H1 (cell line): ENCODE measurements at regions of chr19 and their contacts with region 1.

Region 1: GRCh38 chr19:13033819-13034611 is 38.7 kb downstream of the NFIX start:
- DNase-seq: peak in 1 of 2 experiments; percentile 86
- H3K4me3 ChIP-seq: no peak overlapping the region
- H3K27ac ChIP-seq: no peak overlapping the region
- H3K4me1 ChIP-seq: no peaks in the 10 kb centered on the region
- H3K27me3 ChIP-seq: peaks cover 10 to 67% (median 42%) of the 10 kb centered on the region in 4 experiments
- CTCF ChIP-seq: peak; percentile 86 to 95 (median 93)
- EP300 ChIP-seq: no peak
- POLR2A ChIP-seq: no peak
- RAD21 ChIP-seq: peak; percentile 59 to 74; a peak in 3 of 4 replicates

Region 2: GRCh38 chr19:12722566-12723380 is 311.2 kb before region 1 on chr19:
- CTCF ChIA-PET with region 1: no interaction called
- POLR2A ChIA-PET with region 1: no interaction called
- DNase-seq: peak; percentile 91
- H3K4me3 ChIP-seq: peak overlapping the region; percentile 80 to 93 (median 82)
- H3K27ac ChIP-seq: peak overlapping the region; percentile 87
- H3K4me1 ChIP-seq: peaks cover 0 to 6% (median 2%) of the 10 kb centered on the region in 4 experiments; a peak in 5 of 7 replicates
- H3K27me3 ChIP-seq: no peaks in the 10 kb centered on the region
- CTCF ChIP-seq: no peak
- EP300 ChIP-seq: no peak
- POLR2A ChIP-seq: peak; percentile 55 to 89
- RAD21 ChIP-seq: no peak

Region 3: DNA sequence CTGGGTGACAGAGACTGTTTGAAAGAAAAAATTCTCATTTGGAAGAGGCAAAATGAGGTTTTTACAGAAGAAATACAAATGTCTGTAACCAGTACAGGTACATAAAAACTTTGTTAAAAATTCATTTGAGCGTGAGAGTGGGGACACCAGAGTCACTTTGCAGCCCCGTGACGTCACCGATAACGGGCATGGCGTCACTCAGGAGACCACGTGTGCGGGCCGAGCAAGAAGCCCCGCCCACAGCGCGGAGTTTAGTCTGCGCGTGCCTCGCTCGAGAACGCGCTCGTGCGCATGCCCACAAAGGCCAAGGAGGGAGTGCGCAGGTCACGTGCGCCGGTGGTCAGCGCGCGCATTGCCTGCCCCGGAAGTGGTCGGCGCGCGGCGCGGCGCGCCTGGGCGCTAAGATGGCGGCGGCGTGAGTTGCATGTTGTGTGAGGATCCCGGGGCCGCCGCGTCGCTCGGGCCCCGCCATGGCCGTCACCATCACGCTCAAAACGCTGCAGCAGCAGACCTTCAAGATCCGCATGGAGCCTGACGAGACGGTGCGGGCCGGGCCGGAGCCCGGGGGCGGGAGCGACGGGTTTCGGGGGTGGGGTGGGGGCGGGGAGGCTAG is 88.4 kb before region 1 on chr19 and contains the start of gene RAD23A:
- CTCF ChIA-PET with region 1: no interaction called
- POLR2A ChIA-PET with region 1: no interaction called
- DNase-seq: peak; percentile 96 to 99
- H3K4me3 ChIP-seq: peak within 1 kb of the TSS; percentile 77 to 93 (median 90)
- H3K27ac ChIP-seq: peak within 1 kb of the TSS; percentile 96
- H3K4me1 ChIP-seq: peaks cover 0 to 3% (median under 1%) of the 10 kb centered on the region in 4 experiments; a peak in 1 of 7 replicates
- H3K27me3 ChIP-seq: no peaks in the 10 kb centered on the region
- CTCF ChIP-seq: peak in 1 of 3 experiments; percentile 2; a peak in 1 of 4 replicates
- EP300 ChIP-seq: no peak
- POLR2A ChIP-seq: peak; percentile 98
- RAD21 ChIP-seq: no peak
- total RNA-seq, gene RAD23A: 73.3 and 76.1 TPM in 2 replicates

Region 4: GRCh38 chr19:12983542-12984142 is 50.4 kb before region 1 on chr19:
- CTCF ChIA-PET with region 1: interaction called, 97 read pairs
- POLR2A ChIA-PET with region 1: interaction called, 3 read pairs
- DNase-seq: peak in 1 of 2 experiments; percentile 97
- H3K4me3 ChIP-seq: peak overlapping the region in 2 of 4 experiments; percentile 11 to 63; a peak in 3 of 8 replicates
- H3K27ac ChIP-seq: no peak overlapping the region
- H3K4me1 ChIP-seq: peaks cover 0 to 7% (median 3%) of the 10 kb centered on the region in 4 experiments; a peak in 4 of 7 replicates
- H3K27me3 ChIP-seq: peaks cover 2 to 41% (median 32%) of the 10 kb centered on the region in 4 experiments
- CTCF ChIP-seq: peak; percentile 87 to 89 (median 88)
- EP300 ChIP-seq: peak in 1 of 2 experiments; percentile 31; a peak in 1 of 3 replicates
- POLR2A ChIP-seq: no peak
- RAD21 ChIP-seq: peak; percentile 64 to 73

Region 5: GRCh38 chr19:13012690-13013608 is 21.1 kb before region 1 on chr19:
- CTCF ChIA-PET with region 1: interaction called, 175 read pairs
- POLR2A ChIA-PET with region 1: interaction called, 14 read pairs
- DNase-seq: no peak
- H3K4me3 ChIP-seq: peak overlapping the region in 1 of 4 experiments; percentile 37; a peak in 4 of 8 replicates
- H3K27ac ChIP-seq: no peak overlapping the region
- H3K4me1 ChIP-seq: peaks cover 5 to 41% (median 31%) of the 10 kb centered on the region in 4 experiments
- H3K27me3 ChIP-seq: peaks cover 91 to 100% (median 100%) of the 10 kb centered on the region in 4 experiments
- CTCF ChIP-seq: no peak
- EP300 ChIP-seq: no peak
- POLR2A ChIP-seq: no peak
- RAD21 ChIP-seq: no peak

Region 6: GRCh38 chr19:13053761-13054625 is 20.0 kb after region 1 on chr19:
- CTCF ChIA-PET with region 1: interaction called, 1,145 read pairs
- POLR2A ChIA-PET with region 1: interaction called, 18 read pairs
- DNase-seq: no peak
- H3K4me3 ChIP-seq: no peak overlapping the region
- H3K27ac ChIP-seq: no peak overlapping the region
- H3K4me1 ChIP-seq: peaks cover 7 to 42% (median 39%) of the 10 kb centered on the region in 4 experiments
- H3K27me3 ChIP-seq: peaks cover 87 to 100% (median 98%) of the 10 kb centered on the region in 4 experiments
- CTCF ChIP-seq: no peak
- EP300 ChIP-seq: no peak
- POLR2A ChIP-seq: no peak
- RAD21 ChIP-seq: no peak

Region 7: GRCh38 chr19:13082192-13083007 is 48.4 kb after region 1 on chr19:
- CTCF ChIA-PET with region 1: interaction called, 1,145 read pairs
- POLR2A ChIA-PET with region 1: interaction called, 3 read pairs
- DNase-seq: no peak
- H3K4me3 ChIP-seq: no peak overlapping the region
- H3K27ac ChIP-seq: no peak overlapping the region
- H3K4me1 ChIP-seq: peaks cover 11 to 29% (median 19%) of the 10 kb centered on the region in 4 experiments
- H3K27me3 ChIP-seq: peaks cover 0 to 16% (median 8%) of the 10 kb centered on the region in 4 experiments; a peak in 3 of 7 replicates
- CTCF ChIP-seq: peak; percentile 22 to 42 (median 36); a peak in 3 of 4 replicates
- EP300 ChIP-seq: no peak
- POLR2A ChIP-seq: no peak
- RAD21 ChIP-seq: peak; percentile 48 to 54